CD8-positive, alpha-beta T cell (primary cell): ENCODE measurements at regions of chr17 and their contacts with region 1.

Region 1: GRCh38 chr17:30336369-30337171 is 2.7 kb upstream of the TMIGD1 start:
- DNase-seq: peak in 8 of 9 experiments; percentile 42 to 81 (median 62)
- ATAC-seq: peak; percentile 40
- H3K4me3 ChIP-seq: no peak overlapping the region
- H3K4me3 Mint-ChIP-seq: no peak overlapping the region
- H3K27ac ChIP-seq: no peak overlapping the region
- H3K27ac Mint-ChIP-seq: no peak overlapping the region
- H3K4me1 ChIP-seq: peaks cover 21% of the 10 kb centered on the region
- H3K4me1 Mint-ChIP-seq: peaks cover 30% of the 10 kb centered on the region
- H3K27me3 ChIP-seq: no peaks in the 10 kb centered on the region
- H3K27me3 Mint-ChIP-seq: no peaks in the 10 kb centered on the region
- CTCF ChIP-seq: peak; percentile 96

Region 2: GRCh38 chr17:30021708-30022317 is 314.8 kb before region 1 on chr17:
- CTCF ChIA-PET with region 1: no interaction called
- POLR2A ChIA-PET with region 1: no interaction called
- intact Hi-C with region 1: no loop called
- DNase-seq: peak in 6 of 9 experiments; percentile 3 to 68 (median 31)
- ATAC-seq: peak; percentile 76
- H3K4me3 ChIP-seq: no peak overlapping the region
- H3K4me3 Mint-ChIP-seq: no peak overlapping the region
- H3K27ac ChIP-seq: no peak overlapping the region
- H3K27ac Mint-ChIP-seq: no peak overlapping the region
- H3K4me1 ChIP-seq: no peaks in the 10 kb centered on the region
- H3K4me1 Mint-ChIP-seq: peaks cover 2% of the 10 kb centered on the region
- H3K27me3 ChIP-seq: no peaks in the 10 kb centered on the region
- H3K27me3 Mint-ChIP-seq: peaks cover 5% of the 10 kb centered on the region
- CTCF ChIP-seq: peak; percentile 88

Region 3: GRCh38 chr17:30124273-30124796 is 212.2 kb before region 1 on chr17:
- CTCF ChIA-PET with region 1: interaction called, 144 read pairs
- POLR2A ChIA-PET with region 1: interaction called, 4 read pairs
- intact Hi-C with region 1: loop called (anchors 1 kb)
- DNase-seq: no peak
- ATAC-seq: no peak
- H3K4me3 ChIP-seq: no peak overlapping the region
- H3K4me3 Mint-ChIP-seq: no peak overlapping the region
- H3K27ac ChIP-seq: no peak overlapping the region
- H3K27ac Mint-ChIP-seq: peak overlapping the region; percentile 3
- H3K4me1 ChIP-seq: peaks cover 9% of the 10 kb centered on the region
- H3K4me1 Mint-ChIP-seq: peaks cover 38% of the 10 kb centered on the region
- H3K27me3 ChIP-seq: no peaks in the 10 kb centered on the region
- H3K27me3 Mint-ChIP-seq: no peaks in the 10 kb centered on the region
- CTCF ChIP-seq: no peak

Region 4: DNA sequence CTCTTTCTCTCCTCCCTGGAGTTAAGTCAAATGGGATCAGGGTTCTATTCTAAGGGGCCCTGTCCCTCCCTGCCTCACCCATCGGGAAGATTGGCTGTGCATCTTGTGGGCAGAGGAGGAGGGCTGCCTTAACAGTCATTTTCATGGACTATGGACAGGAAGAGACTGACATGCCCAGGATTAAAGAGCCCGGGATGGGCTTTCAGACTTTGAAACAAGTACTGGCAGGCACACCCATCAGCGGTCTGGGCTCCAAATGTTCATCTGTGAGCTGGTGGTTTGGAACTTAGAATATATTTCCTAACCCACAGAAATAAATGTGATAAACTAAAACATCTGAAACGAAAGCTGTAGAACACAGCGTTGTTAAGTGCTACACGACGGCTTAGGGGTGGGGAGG is 107.6 kb before region 1 on chr17:
- CTCF ChIA-PET with region 1: no interaction called
- POLR2A ChIA-PET with region 1: no interaction called
- intact Hi-C with region 1: no loop called
- DNase-seq: no peak
- ATAC-seq: no peak
- H3K4me3 ChIP-seq: no peak overlapping the region
- H3K4me3 Mint-ChIP-seq: no peak overlapping the region
- H3K27ac ChIP-seq: no peak overlapping the region
- H3K27ac Mint-ChIP-seq: no peak overlapping the region
- H3K4me1 ChIP-seq: no peaks in the 10 kb centered on the region
- H3K4me1 Mint-ChIP-seq: no peaks in the 10 kb centered on the region
- H3K27me3 ChIP-seq: peaks cover 0 to 3% of the 10 kb centered on the region in 2 experiments
- H3K27me3 Mint-ChIP-seq: peaks cover 37% of the 10 kb centered on the region
- CTCF ChIP-seq: no peak

Region 5: DNA sequence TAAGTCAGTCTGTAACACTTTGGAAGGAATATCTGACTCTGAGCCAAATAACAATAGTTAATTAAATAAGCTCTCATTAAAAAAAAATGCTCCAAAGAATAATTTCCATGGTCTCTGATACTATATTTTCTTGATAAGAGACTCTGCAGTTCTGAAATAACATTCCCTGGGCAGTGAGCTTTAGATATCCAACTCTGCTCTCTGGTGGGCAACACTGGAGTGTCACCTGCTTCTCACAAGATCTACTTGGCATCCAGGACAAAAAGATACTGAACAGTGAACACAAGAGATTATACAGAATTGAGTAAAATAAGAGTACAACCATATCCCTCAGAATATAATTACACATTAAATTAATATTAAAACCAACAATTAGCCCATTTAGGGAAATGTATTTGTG is 58.5 kb before region 1 on chr17:
- CTCF ChIA-PET with region 1: interaction called, 8 read pairs
- POLR2A ChIA-PET with region 1: no interaction called
- intact Hi-C with region 1: loop called in 1 of 2 experiments (anchors 5 kb)
- DNase-seq: peak in 3 of 9 experiments; percentile 22 to 37 (median 23)
- ATAC-seq: peak; percentile 34
- H3K4me3 ChIP-seq: no peak overlapping the region
- H3K4me3 Mint-ChIP-seq: no peak overlapping the region
- H3K27ac ChIP-seq: no peak overlapping the region
- H3K27ac Mint-ChIP-seq: no peak overlapping the region
- H3K4me1 ChIP-seq: no peaks in the 10 kb centered on the region
- H3K4me1 Mint-ChIP-seq: no peaks in the 10 kb centered on the region
- H3K27me3 ChIP-seq: no peaks in the 10 kb centered on the region
- H3K27me3 Mint-ChIP-seq: no peaks in the 10 kb centered on the region
- CTCF ChIP-seq: peak; percentile 36

Region 6: DNA sequence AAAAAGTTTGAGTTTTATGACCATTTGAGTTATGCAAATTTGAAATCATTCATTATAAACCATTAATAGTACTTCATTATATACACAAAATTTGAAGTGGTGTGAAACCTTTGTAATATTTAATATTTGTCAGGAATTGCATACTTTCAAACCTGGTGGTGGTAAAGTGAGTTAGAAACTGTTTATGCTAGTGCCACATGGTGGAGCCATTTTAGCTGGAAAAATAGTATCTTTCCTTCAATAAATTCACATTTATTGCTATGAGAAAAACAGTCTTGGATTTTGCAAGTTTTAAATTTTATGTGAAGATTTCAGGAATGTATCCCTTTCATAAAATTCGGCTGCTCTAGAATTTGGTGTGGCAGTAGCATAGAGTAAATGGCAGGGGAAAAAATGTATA is 37.6 kb before region 1 on chr17:
- CTCF ChIA-PET with region 1: interaction called, 15 read pairs
- POLR2A ChIA-PET with region 1: interaction called, 3 read pairs
- intact Hi-C with region 1: loop called in 1 of 2 experiments (anchors 1 kb)
- DNase-seq: peak in 2 of 9 experiments; percentile 7 to 14
- ATAC-seq: no peak
- H3K4me3 ChIP-seq: no peak overlapping the region
- H3K4me3 Mint-ChIP-seq: no peak overlapping the region
- H3K27ac ChIP-seq: no peak overlapping the region
- H3K27ac Mint-ChIP-seq: no peak overlapping the region
- H3K4me1 ChIP-seq: no peaks in the 10 kb centered on the region
- H3K4me1 Mint-ChIP-seq: no peaks in the 10 kb centered on the region
- H3K27me3 ChIP-seq: no peaks in the 10 kb centered on the region
- H3K27me3 Mint-ChIP-seq: no peaks in the 10 kb centered on the region
- CTCF ChIP-seq: no peak

Region 7: DNA sequence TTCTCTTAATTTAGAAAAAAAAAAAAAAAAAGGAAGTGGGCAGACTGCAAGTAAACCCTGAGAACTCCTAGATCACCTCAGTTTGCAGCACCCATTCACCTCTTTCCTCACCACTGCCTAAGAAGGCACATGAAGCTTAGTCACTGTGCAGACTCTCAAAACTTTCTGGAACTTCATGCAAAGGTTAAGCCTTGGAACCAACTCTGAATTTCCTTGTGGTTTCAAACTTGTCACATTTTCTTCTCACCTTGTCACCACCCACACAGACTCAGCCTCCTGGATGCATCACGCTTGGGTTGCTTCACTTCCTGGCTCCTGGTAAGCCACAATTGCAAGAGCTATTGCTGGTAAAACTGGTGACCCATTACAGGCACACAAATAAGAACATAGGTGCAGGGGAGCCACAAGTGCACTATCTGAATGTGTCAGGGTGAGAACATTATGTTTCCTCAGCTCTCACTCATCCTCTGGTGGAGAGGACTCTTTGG is 27.2 kb after region 1 on chr17:
- CTCF ChIA-PET with region 1: interaction called, 12 read pairs
- POLR2A ChIA-PET with region 1: no interaction called
- intact Hi-C with region 1: no loop called
- DNase-seq: peak; percentile 43 to 95 (median 74)
- ATAC-seq: peak; percentile 84
- H3K4me3 ChIP-seq: no peak overlapping the region
- H3K4me3 Mint-ChIP-seq: peak overlapping the region; percentile 52
- H3K27ac ChIP-seq: peak overlapping the region in 1 of 2 experiments; percentile 52
- H3K27ac Mint-ChIP-seq: peak overlapping the region; percentile 70
- H3K4me1 ChIP-seq: peaks cover 27% of the 10 kb centered on the region
- H3K4me1 Mint-ChIP-seq: peaks cover 37% of the 10 kb centered on the region
- H3K27me3 ChIP-seq: no peaks in the 10 kb centered on the region
- H3K27me3 Mint-ChIP-seq: no peaks in the 10 kb centered on the region
- CTCF ChIP-seq: no peak